SK-N-SH (cell line): ENCODE measurements at regions of chr19 and their contacts with region 1.

Region 1: GRCh38 chr19:15379083-15379995 is at the start of gene AKAP8:
- DNase-seq: peak; percentile 100
- H3K4me3 ChIP-seq: peak within 1 kb of the TSS; percentile 84 to 91
- H3K27ac ChIP-seq: peak within 1 kb of the TSS; percentile 88 to 93
- H3K4me1 ChIP-seq: peaks cover 9 to 31% of the 10 kb centered on the region in 2 experiments; a peak in 3 of 4 replicates
- H3K27me3 ChIP-seq: no peaks in the 10 kb centered on the region
- CTCF ChIP-seq: no peak
- EP300 ChIP-seq: no peak
- RAD21 ChIP-seq: no peak
- polyA plus RNA-seq, gene AKAP8: 17.2 and 21.0 TPM in 2 replicates

Region 2: DNA sequence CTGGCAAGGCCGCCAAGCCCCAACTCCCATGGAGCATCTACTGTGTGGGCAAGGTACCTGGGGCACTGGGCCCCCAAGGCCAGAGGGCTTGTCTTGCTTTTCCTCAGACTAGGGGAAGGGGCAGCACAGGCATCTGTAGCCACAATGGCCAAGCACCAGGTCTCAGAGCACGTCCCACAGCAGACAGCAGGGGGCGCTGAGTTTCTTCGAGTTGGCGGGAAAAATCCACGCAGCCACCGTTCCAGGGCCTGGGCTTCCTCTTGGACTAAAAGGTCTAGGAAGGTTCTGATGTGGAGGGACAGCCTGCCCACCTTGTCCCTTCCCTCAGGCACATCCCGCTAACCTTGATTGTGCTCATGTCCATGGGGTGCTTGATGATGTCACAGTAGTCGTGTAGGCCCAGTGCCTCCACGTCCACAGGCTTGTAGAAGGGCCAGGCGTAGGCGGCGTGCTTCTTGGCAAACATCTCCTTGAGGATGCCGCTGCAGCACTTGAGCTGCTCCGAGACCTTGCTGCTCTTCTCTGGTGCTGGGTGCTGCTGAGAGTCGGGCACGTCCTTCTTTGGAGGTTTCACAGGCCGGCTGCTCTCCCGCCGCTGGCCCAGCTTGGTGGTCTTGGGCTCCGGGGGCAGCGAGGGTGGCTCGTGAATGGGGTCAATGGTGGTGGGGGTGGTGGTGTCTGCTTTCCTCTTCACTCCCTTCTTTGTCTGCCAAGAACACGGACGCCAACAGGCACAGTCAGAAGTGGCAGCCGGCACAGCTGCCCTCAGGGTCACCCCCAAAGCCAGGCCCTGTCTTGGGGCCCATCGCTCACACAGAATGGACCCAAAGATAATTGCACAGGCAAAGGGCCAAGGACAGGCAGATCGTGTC is 115.0 kb before region 1 on chr19:
- CTCF ChIA-PET with region 1: interaction called, 14 read pairs
- POLR2A ChIA-PET with region 1: interaction called, 4 read pairs
- DNase-seq: peak; percentile 85
- H3K4me3 ChIP-seq: no peak overlapping the region
- H3K27ac ChIP-seq: peak overlapping the region in 1 of 2 experiments; percentile 81; a peak in 1 of 4 replicates
- H3K4me1 ChIP-seq: peaks cover 12 to 43% of the 10 kb centered on the region in 2 experiments
- H3K27me3 ChIP-seq: no peaks in the 10 kb centered on the region
- CTCF ChIP-seq: peak; percentile 85
- EP300 ChIP-seq: no peak
- RAD21 ChIP-seq: peak; percentile 85

Region 3: DNA sequence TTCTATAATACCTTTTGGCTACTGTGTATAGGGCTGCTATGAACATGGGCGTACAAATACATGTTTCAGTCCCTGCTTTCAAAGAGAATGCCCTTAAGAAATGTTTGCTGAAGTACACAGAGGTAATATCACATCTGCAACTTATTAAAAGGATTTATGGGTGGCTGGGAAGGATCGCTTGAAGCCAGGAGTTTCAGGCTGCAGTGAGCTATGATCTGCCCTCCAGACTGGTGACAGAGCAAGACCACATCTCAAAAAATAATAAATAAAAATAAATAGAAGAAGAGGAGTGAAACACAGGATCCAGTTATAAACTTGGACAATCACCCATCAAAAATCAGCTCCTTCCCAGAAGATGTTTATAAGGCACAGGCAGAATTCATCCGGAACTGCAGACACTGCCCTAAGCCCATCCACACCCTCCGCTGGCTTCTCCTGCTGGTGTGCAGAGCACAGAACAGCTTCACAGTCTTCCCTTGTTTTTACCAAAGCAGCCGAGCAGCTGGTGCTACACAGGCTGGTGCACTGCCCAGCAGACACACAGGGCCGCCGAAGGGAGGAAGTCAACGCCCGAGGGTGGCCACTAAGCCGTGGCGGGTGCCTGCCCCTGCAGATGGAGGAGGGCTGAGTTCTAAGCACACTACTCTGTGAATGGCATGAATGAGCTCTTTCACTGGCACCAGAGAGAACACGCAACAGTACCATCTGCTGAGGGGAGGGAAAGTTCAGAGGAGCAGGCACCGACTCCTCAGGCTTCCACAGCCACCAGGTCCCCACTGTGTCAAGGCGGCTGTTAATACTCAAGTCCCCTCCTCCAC is 91.0 kb before region 1 on chr19:
- CTCF ChIA-PET with region 1: interaction called, 3 read pairs
- POLR2A ChIA-PET with region 1: interaction called, 10 read pairs
- DNase-seq: peak; percentile 72
- H3K4me3 ChIP-seq: no peak overlapping the region
- H3K27ac ChIP-seq: peak overlapping the region; percentile 14 to 94; a peak in 3 of 4 replicates
- H3K4me1 ChIP-seq: peaks cover 81 to 92% of the 10 kb centered on the region in 2 experiments; a peak in 3 of 4 replicates
- H3K27me3 ChIP-seq: no peaks in the 10 kb centered on the region
- CTCF ChIP-seq: no peak
- EP300 ChIP-seq: peak in 1 of 2 experiments; percentile 37; a peak in 1 of 4 replicates
- RAD21 ChIP-seq: no peak; the same call in 1 of the 2 replicates

Region 4: GRCh38 chr19:15452111-15453047 is 73.0 kb after region 1 on chr19:
- CTCF ChIA-PET with region 1: no interaction called
- POLR2A ChIA-PET with region 1: interaction called, 10 read pairs
- DNase-seq: peak; percentile 98
- H3K4me3 ChIP-seq: peak overlapping the region; percentile 45 to 60
- H3K27ac ChIP-seq: peak overlapping the region in 1 of 2 experiments; percentile 39; a peak in 1 of 4 replicates
- H3K4me1 ChIP-seq: peaks cover 0 to 24% of the 10 kb centered on the region in 2 experiments; a peak in 2 of 4 replicates
- H3K27me3 ChIP-seq: 0 out of 2 replicates have a peak, but pooled peaks cover 15% of the 10 kb centered on the region
- CTCF ChIP-seq: no peak
- EP300 ChIP-seq: no peak
- RAD21 ChIP-seq: no peak